MCF 10A (cell line): ENCODE measurements at regions of chr19 and their contacts with region 1.

Region 1: DNA sequence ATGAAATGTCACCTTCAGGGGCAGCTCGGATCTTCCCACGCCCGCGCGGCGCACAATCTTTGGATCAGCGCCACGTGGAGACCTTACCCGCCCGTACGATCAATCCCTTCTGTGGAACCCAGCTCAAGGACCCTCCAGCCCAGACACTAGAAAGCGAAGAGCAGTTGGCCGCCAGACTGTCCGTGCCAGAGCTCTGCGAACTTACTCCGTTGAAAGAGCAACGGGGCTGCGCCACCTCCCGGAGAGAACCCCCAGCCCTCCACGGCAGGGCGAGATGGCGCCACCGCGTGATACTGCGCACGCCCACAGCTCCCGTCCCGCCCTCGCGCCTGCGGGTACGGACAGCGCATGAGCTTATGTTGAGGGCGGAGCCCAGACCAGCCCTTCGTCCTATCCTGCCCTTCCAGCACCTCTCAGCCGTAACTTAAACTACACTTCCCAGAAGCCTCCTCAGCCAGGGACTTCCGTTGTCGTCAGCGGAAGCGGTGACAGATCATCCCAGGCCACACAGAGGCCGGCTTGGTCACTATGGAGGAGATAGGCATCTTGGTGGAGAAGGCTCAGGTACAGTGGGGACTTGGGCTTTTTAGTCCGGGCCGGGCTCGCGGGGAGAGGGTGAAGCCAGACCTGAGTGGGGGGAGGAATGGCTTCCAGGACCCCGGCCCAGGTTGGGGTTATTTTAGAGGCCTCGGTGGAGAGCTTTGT is at the start of gene PSMC4:
- DNase-seq: peak; percentile 99
- H3K4me3 Mint-ChIP-seq: peak within 1 kb of the TSS; percentile 93
- H3K27ac Mint-ChIP-seq: peak within 1 kb of the TSS; percentile 98
- H3K4me1 Mint-ChIP-seq: peaks cover 19% of the 10 kb centered on the region
- H3K27me3 Mint-ChIP-seq: no peaks in the 10 kb centered on the region
- CTCF ChIP-seq: peak; percentile 41
- total RNA-seq, gene PSMC4: 105 and 108 TPM in 2 replicates

Region 2: DNA sequence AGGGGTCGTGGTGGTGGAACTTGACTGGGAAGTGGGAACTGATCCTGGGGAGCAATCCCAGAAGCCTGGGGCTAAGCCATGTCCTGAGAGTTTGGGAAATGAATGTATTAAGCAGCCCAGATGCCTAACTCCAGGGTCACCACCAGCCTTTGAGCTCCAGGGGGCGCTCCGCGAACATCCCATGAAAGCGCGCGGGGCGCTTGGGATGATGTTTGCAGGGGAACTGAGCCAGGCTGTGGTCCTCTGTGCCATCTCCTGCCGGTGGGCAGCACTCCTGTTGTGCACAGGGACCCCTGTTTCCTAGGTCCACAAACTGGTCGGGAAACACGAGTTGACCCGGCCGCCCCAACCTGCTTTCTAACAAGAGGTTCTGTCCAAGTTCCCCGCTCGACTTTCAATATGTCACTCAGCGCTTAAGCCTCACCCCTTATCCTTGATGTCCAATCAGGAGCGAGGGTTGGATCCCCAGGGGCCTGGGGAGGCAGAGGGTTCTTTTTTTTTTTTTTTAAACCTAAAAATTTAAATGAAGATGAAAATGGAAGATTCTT is 177.8 kb before region 1 on chr19:
- CTCF ChIA-PET with region 1: interaction called, 11 read pairs
- POLR2A ChIA-PET with region 1: interaction called, 4 read pairs
- intact Hi-C with region 1: loop called (anchors 1 kb)
- DNase-seq: peak; percentile 81
- H3K4me3 Mint-ChIP-seq: peak overlapping the region; percentile 29
- H3K27ac Mint-ChIP-seq: no peak overlapping the region
- H3K4me1 Mint-ChIP-seq: no peaks in the 10 kb centered on the region
- H3K27me3 Mint-ChIP-seq: peaks cover 36% of the 10 kb centered on the region
- CTCF ChIP-seq: peak; percentile 92

Region 3: DNA sequence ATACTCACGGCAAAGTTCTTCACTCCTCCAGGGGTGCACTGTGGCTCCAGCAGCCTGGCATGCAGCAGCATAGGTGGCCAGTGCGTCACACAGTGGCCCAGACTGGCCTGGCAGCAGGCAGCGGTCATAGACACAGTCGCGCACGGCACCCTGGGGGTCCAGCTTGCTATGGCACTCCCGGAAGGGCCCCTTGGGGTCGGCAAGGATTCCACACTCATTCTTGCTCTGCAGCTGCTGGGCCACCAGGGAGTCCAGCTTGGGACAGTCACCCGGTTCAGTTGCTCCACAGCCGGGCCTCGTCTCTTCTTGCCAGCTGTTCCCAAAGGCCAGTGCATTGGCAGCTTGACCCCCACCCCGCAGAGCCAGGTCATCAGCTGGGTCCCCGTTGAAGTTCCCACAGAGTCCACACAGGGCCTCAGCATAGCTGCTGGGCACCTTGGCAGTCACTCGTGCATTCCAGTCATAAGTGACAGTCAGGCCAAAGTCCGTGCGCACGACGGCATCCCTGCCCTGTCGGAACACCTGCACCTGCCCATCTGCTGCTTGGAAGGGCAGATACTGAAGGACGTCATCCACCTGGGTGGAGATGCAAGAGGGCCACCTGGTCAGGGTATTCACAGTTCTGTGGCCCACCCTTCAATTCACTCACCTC is 57.0 kb before region 1 on chr19:
- CTCF ChIA-PET with region 1: no interaction called
- POLR2A ChIA-PET with region 1: no interaction called
- intact Hi-C with region 1: no loop called
- DNase-seq: no peak
- H3K4me3 Mint-ChIP-seq: no peak overlapping the region
- H3K27ac Mint-ChIP-seq: no peak overlapping the region
- H3K4me1 Mint-ChIP-seq: no peaks in the 10 kb centered on the region
- H3K27me3 Mint-ChIP-seq: no peaks in the 10 kb centered on the region
- CTCF ChIP-seq: no peak

Region 4: GRCh38 chr19:39983695-39984305 is 13.0 kb after region 1 on chr19:
- CTCF ChIA-PET with region 1: interaction called, 5 read pairs
- POLR2A ChIA-PET with region 1: interaction called, 14 read pairs
- intact Hi-C with region 1: no loop called
- DNase-seq: no peak
- H3K4me3 Mint-ChIP-seq: no peak overlapping the region
- H3K27ac Mint-ChIP-seq: no peak overlapping the region
- H3K4me1 Mint-ChIP-seq: peaks cover 6% of the 10 kb centered on the region
- H3K27me3 Mint-ChIP-seq: no peaks in the 10 kb centered on the region
- CTCF ChIP-seq: no peak

Region 5: GRCh38 chr19:39996811-39997594 is 26.2 kb after region 1 on chr19 and contains the start of gene ZNF546:
- CTCF ChIA-PET with region 1: interaction called, 6 read pairs
- POLR2A ChIA-PET with region 1: interaction called, 38 read pairs
- intact Hi-C with region 1: loop called (anchors 1 kb)
- DNase-seq: peak; percentile 91
- H3K4me3 Mint-ChIP-seq: peak within 1 kb of the TSS; percentile 91
- H3K27ac Mint-ChIP-seq: peak within 1 kb of the TSS; percentile 93
- H3K4me1 Mint-ChIP-seq: peaks cover 22% of the 10 kb centered on the region
- H3K27me3 Mint-ChIP-seq: no peaks in the 10 kb centered on the region
- CTCF ChIP-seq: no peak
- total RNA-seq, gene ZNF546: 5.2 and 6.3 TPM in 2 replicates

Region 6: GRCh38 chr19:40090241-40091204 is 119.7 kb after region 1 on chr19 and contains the start of gene ZNF780A:
- CTCF ChIA-PET with region 1: no interaction called
- POLR2A ChIA-PET with region 1: interaction called, 16 read pairs
- intact Hi-C with region 1: loop called (anchors 1 kb)
- DNase-seq: peak; percentile 65
- H3K4me3 Mint-ChIP-seq: peak within 1 kb of the TSS; percentile 98
- H3K27ac Mint-ChIP-seq: peak within 1 kb of the TSS; percentile 97
- H3K4me1 Mint-ChIP-seq: peaks cover 12% of the 10 kb centered on the region
- H3K27me3 Mint-ChIP-seq: no peaks in the 10 kb centered on the region
- CTCF ChIP-seq: no peak
- total RNA-seq, gene ZNF780A: 9.7 and 14.0 TPM in 2 replicates

Region 7: DNA sequence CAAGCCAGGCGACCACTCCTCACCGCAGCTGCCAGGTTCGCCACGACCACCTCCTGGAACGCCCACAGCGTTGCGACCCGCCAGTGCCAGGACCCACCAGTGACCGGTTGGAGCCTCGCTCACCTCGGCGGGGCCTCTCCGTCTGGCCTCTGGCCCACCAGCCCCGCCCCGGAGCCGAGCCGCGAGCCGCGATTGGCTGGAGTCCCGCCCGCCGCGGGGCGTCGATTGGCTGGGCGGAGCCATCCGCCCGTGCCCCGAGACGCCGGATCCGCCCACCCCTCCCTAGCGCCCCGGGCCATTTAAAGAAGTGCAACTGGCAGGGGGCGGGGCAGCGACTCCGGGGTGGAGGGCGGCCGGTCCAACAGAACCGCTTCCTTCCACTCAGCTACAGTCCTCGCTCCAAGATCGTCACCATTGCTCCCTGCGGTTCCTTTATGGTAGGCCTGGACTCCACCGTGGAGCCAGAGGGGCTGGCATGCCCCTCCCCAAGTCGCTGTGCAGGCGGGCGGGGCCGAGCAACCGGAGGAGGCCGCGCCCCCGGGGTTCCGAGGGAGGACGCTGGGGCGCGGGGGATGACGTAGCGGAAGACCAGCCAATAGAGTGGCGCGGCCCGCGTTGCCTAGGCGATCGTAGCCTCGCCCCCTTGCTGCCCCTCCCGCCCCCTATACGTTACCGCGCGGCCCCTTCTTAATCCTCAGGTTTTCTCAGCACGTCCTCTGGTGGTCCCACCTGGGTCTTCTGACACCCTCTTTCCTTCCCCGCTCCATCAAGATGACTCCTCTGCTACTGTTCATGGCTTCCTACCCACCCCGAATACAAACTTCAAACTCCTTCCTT is 473.6 kb after region 1 on chr19 and contains the start of gene SERTAD3:
- CTCF ChIA-PET with region 1: no interaction called
- POLR2A ChIA-PET with region 1: no interaction called
- intact Hi-C with region 1: no loop called
- DNase-seq: peak; percentile 96
- H3K4me3 Mint-ChIP-seq: peak within 1 kb of the TSS; percentile 100
- H3K27ac Mint-ChIP-seq: peak within 1 kb of the TSS; percentile 92
- H3K4me1 Mint-ChIP-seq: peaks cover 22% of the 10 kb centered on the region
- H3K27me3 Mint-ChIP-seq: no peaks in the 10 kb centered on the region
- CTCF ChIP-seq: no peak
- total RNA-seq, gene SERTAD3: 23.3 and 29.4 TPM in 2 replicates